ENCODE measurements at regions of chr14 and their contacts with region 1.

Region 1: DNA sequence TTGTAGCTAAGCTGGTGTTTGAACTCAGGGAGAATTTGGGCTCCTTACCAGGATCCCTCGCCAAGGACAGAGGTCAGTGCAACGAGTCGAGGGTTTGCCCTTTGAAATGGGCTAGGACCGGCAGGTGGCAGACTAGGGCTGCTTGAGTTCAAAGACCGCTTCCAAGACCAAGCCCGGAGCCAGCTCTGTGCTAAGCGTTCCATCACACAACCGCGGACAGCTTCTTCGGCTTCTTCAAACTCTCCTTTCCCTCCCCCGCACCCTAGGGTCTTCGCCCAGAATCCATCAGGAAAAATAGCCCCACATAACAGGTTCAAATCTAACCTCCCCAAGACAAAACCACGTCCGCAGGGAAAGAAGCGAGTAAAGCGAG is 705 bp upstream of the FLVCR2 start:
- DNase-seq: no peak
- H3K4me3 ChIP-seq: peak overlapping the region; percentile 59
- CTCF ChIP-seq: peak; percentile 85

Region 2: GRCh38 chr14:75554487-75554886 is 23.2 kb before region 1 on chr14:
- CTCF ChIA-PET with region 1: interaction called, 141 read pairs
- POLR2A ChIA-PET with region 1: no interaction called
- DNase-seq: no peak
- H3K4me3 ChIP-seq: no peak overlapping the region
- CTCF ChIP-seq: no peak

Region 3: DNA sequence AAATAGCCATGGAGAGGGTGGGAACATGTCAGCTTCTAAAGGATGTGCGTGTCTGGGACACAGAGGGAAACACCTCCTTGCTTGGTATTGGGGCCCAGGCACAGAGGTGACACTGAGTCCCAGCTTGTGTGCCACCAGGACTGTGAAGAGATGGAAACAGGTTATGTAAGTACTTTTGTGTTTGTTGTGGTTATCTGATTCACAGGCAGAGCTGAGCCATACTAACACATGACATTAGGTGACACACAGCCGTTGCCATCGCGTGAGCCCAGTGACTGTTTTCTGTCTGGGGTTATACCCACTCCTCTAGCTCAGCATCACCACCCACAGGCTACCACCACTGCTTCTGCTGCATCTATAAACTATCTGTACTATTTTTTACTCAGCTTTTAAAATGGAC is 11.4 kb before region 1 on chr14:
- CTCF ChIA-PET with region 1: interaction called, 141 read pairs
- POLR2A ChIA-PET with region 1: no interaction called
- DNase-seq: no peak
- H3K4me3 ChIP-seq: no peak overlapping the region
- CTCF ChIP-seq: no peak

Region 4: GRCh38 chr14:75636100-75636692 is 58.5 kb after region 1 on chr14:
- CTCF ChIA-PET with region 1: interaction called, 12 read pairs
- POLR2A ChIA-PET with region 1: no interaction called
- DNase-seq: no peak
- H3K4me3 ChIP-seq: no peak overlapping the region
- CTCF ChIP-seq: no peak

Region 5: GRCh38 chr14:75702616-75703261 is 125.0 kb after region 1 on chr14:
- CTCF ChIA-PET with region 1: interaction called, 50 read pairs
- POLR2A ChIA-PET with region 1: no interaction called
- DNase-seq: no peak
- H3K4me3 ChIP-seq: no peak overlapping the region
- CTCF ChIP-seq: no peak

Measured in AG04449 (cell line).